Activated CD4-positive, alpha-beta T cell treated with anti-CD3 and anti-CD28 coated beads for 36 hours (primary cell): ENCODE measurements at regions of chr14 and their contacts with region 1.

Region 1: GRCh38 chr14:61025251-61026223 is 44.5 kb downstream of the SLC38A6 start:
- DNase-seq: peak; percentile 68
- ATAC-seq: peak; percentile 42
- H3K4me3 Mint-ChIP-seq: no peak overlapping the region
- H3K27ac Mint-ChIP-seq: no peak overlapping the region
- H3K4me1 Mint-ChIP-seq: no peaks in the 10 kb centered on the region
- H3K27me3 Mint-ChIP-seq: no peaks in the 10 kb centered on the region

Region 2: GRCh38 chr14:60349663-60350365 is 675.7 kb before region 1 on chr14:
- CTCF ChIA-PET with region 1: no interaction called
- POLR2A ChIA-PET with region 1: no interaction called
- intact Hi-C with region 1: loop called in 1 of 2 experiments (anchors 10 kb)
- DNase-seq: peak; percentile 40
- ATAC-seq: peak; percentile 39
- H3K4me3 Mint-ChIP-seq: no peak overlapping the region
- H3K27ac Mint-ChIP-seq: no peak overlapping the region
- H3K4me1 Mint-ChIP-seq: no peaks in the 10 kb centered on the region
- H3K27me3 Mint-ChIP-seq: no peaks in the 10 kb centered on the region

Region 3: DNA sequence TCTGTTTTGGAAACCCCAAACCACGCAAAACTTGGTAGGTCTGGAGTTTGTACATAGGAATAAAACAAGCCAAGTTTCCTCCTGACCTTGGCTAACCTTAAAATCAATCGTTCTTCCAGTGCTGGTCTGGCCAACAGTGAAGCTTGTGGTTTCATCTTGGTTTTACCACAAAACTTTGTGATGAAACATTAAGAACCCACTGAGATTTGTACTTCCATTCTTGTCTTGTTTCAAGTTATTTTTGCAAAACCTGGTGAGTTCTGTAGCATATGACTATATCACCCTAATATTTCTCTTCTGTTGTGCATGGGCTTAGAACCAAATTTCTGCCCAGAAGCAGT is 402.6 kb before region 1 on chr14:
- CTCF ChIA-PET with region 1: interaction called, 26 read pairs
- POLR2A ChIA-PET with region 1: no interaction called
- intact Hi-C with region 1: loop called (anchors 1 kb)
- DNase-seq: no peak
- ATAC-seq: no peak
- H3K4me3 Mint-ChIP-seq: no peak overlapping the region
- H3K27ac Mint-ChIP-seq: no peak overlapping the region
- H3K4me1 Mint-ChIP-seq: no peaks in the 10 kb centered on the region
- H3K27me3 Mint-ChIP-seq: peaks cover 18% of the 10 kb centered on the region

Region 4: DNA sequence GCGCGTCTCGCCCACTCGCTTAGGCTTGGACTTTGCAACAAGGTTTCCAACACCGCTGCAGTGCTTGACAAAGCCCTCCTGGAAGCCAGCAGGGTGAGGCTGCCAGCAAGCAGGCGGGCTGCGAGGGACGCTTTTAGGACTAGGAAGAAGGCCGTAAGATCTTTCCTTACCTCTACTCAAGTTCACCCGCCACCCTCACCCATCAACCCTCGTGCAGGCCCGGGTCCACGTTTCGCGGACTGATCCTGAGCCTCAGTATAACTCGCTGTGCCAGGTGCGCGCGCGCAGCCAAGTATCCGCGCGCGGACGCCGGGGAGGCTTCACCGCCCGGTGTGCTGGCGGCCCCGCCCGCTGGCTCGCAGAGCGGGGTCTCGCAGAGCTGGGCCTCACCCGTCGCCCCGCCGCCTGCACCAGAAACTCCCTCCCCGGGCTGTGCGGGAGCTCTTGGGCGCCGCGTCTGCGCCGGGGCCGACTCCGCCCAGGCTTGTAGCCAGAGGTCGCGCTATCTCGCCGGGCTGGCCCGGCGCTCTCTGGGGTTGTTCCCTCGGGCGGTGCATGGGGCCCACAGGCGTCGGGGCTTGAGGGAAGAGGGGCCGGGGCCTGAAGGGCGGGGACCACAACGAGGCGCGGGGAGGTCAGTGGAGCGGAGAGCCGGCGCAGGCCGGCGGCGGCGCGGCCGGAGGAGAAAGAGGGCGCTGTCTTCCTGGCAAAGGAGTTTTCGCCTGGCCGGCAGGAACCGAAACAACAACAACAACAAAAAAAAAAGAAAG is 368.7 kb before region 1 on chr14:
- CTCF ChIA-PET with region 1: no interaction called
- POLR2A ChIA-PET with region 1: no interaction called
- intact Hi-C with region 1: loop called (anchors 10 kb)
- DNase-seq: peak; percentile 55
- ATAC-seq: peak; percentile 66
- H3K4me3 Mint-ChIP-seq: peak overlapping the region; percentile 71
- H3K27ac Mint-ChIP-seq: no peak overlapping the region
- H3K4me1 Mint-ChIP-seq: peaks cover 37% of the 10 kb centered on the region
- H3K27me3 Mint-ChIP-seq: peaks cover 79% of the 10 kb centered on the region

Region 5: DNA sequence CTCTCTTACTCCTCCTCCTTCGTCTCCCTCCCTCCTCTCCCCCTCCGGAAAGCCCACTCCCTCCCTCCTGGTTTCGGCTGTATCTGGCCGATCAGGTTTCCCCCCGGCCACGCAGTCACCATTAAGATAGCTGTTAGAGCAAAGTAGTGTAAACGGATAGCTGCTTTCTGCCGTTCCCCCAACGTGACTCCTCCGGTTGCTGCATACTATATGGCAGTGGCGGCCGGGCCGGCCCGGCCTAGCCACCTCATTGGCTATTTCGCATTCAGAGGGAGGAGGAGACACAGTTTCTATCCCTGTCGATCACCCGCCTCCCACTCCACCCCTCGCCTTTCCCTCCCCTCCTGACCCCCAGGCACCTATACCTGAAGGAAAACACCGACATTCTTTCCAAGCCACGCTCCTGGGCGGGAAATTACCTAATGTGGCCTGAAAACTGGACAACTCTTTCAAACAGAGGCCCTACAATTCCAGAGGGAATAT is 301.4 kb before region 1 on chr14 and contains the start of gene SIX4:
- CTCF ChIA-PET with region 1: no interaction called
- POLR2A ChIA-PET with region 1: no interaction called
- intact Hi-C with region 1: loop called in 1 of 2 experiments (anchors 5 kb)
- DNase-seq: peak; percentile 47
- ATAC-seq: peak; percentile 38
- H3K4me3 Mint-ChIP-seq: peak within 1 kb of the TSS; percentile 77
- H3K27ac Mint-ChIP-seq: no peak within 1 kb of the TSS
- H3K4me1 Mint-ChIP-seq: peaks cover 16% of the 10 kb centered on the region
- H3K27me3 Mint-ChIP-seq: peaks cover 68% of the 10 kb centered on the region
- total RNA-seq, gene SIX4: 0.11 TPM in 1 of 2 experiments, not detected in the other

Region 6: GRCh38 chr14:61252369-61253063 is 227.0 kb after region 1 on chr14:
- CTCF ChIA-PET with region 1: interaction called, 14 read pairs
- POLR2A ChIA-PET with region 1: no interaction called
- intact Hi-C with region 1: loop called (anchors 1 kb)
- DNase-seq: peak; percentile 79
- ATAC-seq: peak; percentile 91
- H3K4me3 Mint-ChIP-seq: no peak overlapping the region
- H3K27ac Mint-ChIP-seq: no peak overlapping the region
- H3K4me1 Mint-ChIP-seq: peaks cover 5% of the 10 kb centered on the region
- H3K27me3 Mint-ChIP-seq: peaks cover 18% of the 10 kb centered on the region